BJ (cell line): ENCODE measurements at regions of chr12 and their contacts with region 1.

Region 1: DNA sequence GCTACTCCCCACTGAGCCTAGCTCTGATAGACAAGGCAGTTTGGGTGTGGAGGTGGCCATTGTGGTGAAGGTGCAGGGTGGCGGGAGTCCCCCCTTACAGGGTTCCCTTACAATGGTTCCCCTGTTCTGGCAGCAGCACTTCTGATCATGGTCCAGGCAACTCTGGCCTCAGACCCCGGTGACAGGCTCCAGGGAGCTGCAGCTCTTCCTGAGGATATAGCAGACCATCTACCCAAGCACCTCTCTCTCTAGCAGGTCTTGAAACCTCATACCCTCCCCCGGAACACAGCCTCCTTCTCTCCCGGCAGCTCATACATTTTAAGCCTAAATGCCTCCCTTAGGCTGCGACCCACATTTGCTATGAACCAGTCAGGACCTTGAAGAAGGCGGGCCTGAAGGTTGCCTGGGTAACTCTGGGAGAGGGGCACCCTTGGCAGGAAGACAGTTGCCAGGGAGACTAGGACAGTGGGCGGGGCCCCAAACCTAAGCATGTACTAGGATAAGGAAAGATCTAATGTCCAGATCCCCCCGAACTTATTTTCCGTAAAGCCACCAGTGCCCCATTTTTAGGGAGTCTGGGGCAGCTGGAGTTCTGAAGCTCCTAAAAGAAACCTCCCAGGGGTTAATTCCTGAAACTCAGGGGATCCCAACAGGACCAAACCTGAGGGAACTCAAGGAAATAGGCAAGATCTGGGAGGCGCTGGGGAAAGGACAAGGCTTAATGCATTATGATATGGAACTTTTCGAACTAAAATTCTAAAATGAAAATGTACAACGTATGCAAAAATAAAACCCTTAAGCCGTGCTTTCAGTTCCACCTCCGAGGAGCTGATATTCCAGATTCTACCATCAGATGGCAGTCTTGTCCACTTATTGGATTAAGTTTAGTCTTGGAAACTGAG is 4.5 kb upstream of the GDF11 start:
- DNase-seq: no peak
- H3K4me3 ChIP-seq: peak overlapping the region; percentile 58
- H3K27me3 ChIP-seq: no peaks in the 10 kb centered on the region
- CTCF ChIP-seq: peak; percentile 67

Region 2: DNA sequence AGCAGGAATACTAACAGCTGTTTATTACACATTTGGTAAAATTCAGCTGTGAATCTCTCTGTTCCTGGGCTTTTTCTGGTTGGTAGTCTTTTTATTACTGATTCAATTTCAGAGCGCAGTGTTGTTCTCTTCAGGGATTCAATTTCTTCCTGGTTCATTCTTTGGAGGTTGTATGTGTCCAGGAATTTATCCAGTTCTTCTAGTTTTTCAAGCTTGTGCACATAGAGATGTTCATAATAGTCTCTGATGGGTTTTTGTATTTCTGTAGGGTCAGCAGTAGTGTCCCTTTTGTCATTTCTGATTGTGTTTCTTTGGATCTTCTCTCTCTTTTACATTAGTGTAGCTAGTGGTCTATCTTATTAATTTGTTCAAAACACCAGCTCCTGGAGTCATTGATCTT is 321.4 kb before region 1 on chr12:
- CTCF ChIA-PET with region 1: no interaction called
- POLR2A ChIA-PET with region 1: no interaction called
- DNase-seq: no peak
- H3K4me3 ChIP-seq: no peak overlapping the region
- H3K27me3 ChIP-seq: no peaks in the 10 kb centered on the region
- CTCF ChIP-seq: no peak

Region 3: GRCh38 chr12:55681142-55682077 is 57.0 kb before region 1 on chr12:
- CTCF ChIA-PET with region 1: interaction called, 22 read pairs
- POLR2A ChIA-PET with region 1: no interaction called
- DNase-seq: no peak
- H3K4me3 ChIP-seq: no peak overlapping the region
- H3K27me3 ChIP-seq: no peaks in the 10 kb centered on the region; the same call in 1 of the 2 replicates
- CTCF ChIP-seq: peak; percentile 48

Region 4: GRCh38 chr12:55789171-55789570 is 50.8 kb after region 1 on chr12:
- CTCF ChIA-PET with region 1: interaction called, 64 read pairs
- POLR2A ChIA-PET with region 1: no interaction called
- DNase-seq: no peak
- H3K4me3 ChIP-seq: no peak overlapping the region
- H3K27me3 ChIP-seq: no peaks in the 10 kb centered on the region
- CTCF ChIP-seq: no peak

Region 5: DNA sequence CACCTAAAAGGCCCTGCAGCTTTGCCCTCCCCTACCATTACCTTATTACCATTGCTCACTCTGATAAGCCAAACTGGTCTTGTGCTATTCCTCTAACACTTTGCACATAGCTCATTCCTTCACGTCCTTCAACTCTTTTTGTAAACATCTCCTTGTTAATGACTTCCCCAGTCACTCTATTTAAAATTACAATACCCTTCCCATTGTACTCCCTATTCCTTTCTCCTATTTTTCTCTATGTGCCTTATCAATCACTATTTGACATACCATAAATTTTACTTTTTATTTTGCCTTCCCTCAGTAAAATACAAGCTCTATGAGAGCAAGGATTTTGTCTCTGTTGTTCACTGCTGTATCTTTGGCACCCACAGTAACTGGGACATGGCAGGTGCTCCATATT is 73.7 kb after region 1 on chr12:
- CTCF ChIA-PET with region 1: interaction called, 12 read pairs
- POLR2A ChIA-PET with region 1: interaction called, 5 read pairs
- DNase-seq: no peak
- H3K4me3 ChIP-seq: no peak overlapping the region
- H3K27me3 ChIP-seq: no peaks in the 10 kb centered on the region
- CTCF ChIP-seq: no peak

Region 6: GRCh38 chr12:55926738-55927587 is 188.6 kb after region 1 on chr12:
- CTCF ChIA-PET with region 1: interaction called, 86 read pairs
- POLR2A ChIA-PET with region 1: no interaction called
- DNase-seq: peak; percentile 72
- H3K4me3 ChIP-seq: peak overlapping the region; percentile 78
- H3K27me3 ChIP-seq: no peaks in the 10 kb centered on the region
- CTCF ChIP-seq: peak; percentile 91

Region 7: DNA sequence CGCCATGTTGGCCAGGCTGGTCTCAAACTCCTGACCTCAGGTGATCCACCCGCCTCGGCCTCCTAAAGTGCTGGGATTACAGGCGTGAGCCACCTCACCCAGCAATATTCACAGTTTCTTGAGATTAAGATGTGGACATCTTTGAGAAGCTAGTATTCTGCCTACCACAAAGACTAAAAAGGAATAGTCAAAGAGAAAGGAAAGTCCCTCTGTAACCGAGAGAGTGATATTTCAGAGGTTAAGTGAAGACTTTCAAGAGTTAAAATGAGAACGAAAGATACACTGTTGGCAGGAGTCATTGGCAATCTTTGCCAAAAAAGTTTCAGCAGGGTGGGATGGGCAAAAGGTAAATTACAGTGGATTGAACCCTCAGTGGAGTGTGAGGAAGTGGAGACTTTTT is 208.2 kb after region 1 on chr12:
- CTCF ChIA-PET with region 1: interaction called, 53 read pairs
- POLR2A ChIA-PET with region 1: no interaction called
- DNase-seq: no peak
- H3K4me3 ChIP-seq: no peak overlapping the region
- H3K27me3 ChIP-seq: no peaks in the 10 kb centered on the region
- CTCF ChIP-seq: no peak

Region 8: DNA sequence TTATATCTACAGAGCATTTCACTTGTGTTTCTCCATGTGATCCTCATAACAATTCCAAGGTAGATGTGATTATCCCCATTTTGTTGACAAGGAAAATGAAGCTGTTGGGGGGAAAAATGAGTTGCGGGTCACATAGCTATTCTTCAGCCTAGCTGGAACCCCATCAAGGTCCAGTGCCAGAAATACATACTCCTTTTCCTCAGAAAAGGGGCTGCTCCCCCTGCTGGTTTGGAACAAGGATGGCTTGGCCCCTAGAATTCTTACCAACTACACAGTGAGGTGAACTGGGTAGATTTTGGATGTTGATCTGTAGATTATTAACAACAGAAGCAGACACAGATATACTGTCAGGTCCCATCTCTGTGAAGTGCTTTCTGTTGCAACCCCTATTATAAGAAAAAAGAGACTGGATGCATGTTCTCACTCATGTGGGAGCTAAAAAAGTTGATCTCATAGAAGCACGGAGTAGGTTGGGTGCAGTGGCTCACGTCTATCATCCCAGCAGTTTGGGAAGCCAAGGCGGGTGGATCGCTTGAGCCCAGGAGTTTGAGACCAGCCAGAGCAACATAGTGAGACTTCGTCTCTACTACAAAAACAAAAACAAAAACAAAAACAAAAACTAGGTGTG is 291.4 kb after region 1 on chr12:
- CTCF ChIA-PET with region 1: interaction called, 14 read pairs
- POLR2A ChIA-PET with region 1: no interaction called
- DNase-seq: no peak
- H3K4me3 ChIP-seq: no peak overlapping the region
- H3K27me3 ChIP-seq: no peaks in the 10 kb centered on the region
- CTCF ChIP-seq: peak; percentile 86